CD4-positive, alpha-beta T cell (primary cell): ENCODE measurements at regions of chr2 and their contacts with region 1.

Region 1: GRCh38 chr2:128090945-128091725 is at the start of gene UGGT1:
- DNase-seq: peak; percentile 88 to 98 (median 91)
- ATAC-seq: peak; percentile 96
- H3K4me3 ChIP-seq: peak within 1 kb of the TSS; percentile 89
- H3K4me3 Mint-ChIP-seq: peak within 1 kb of the TSS; percentile 98
- H3K27ac ChIP-seq: peak within 1 kb of the TSS; percentile 75 to 82
- H3K27ac Mint-ChIP-seq: peak within 1 kb of the TSS; percentile 97
- H3K4me1 ChIP-seq: peaks cover 26% of the 10 kb centered on the region
- H3K4me1 Mint-ChIP-seq: peaks cover 53% of the 10 kb centered on the region
- H3K27me3 ChIP-seq: no peaks in the 10 kb centered on the region
- H3K27me3 Mint-ChIP-seq: no peaks in the 10 kb centered on the region
- CTCF ChIP-seq: no peak
- total RNA-seq, gene UGGT1: 23.5 to 28.4 TPM

Region 2: GRCh38 chr2:127293748-127294562 is 797.2 kb before region 1 on chr2 and contains the start of gene ERCC3:
- CTCF ChIA-PET with region 1: no interaction called
- POLR2A ChIA-PET with region 1: interaction called, 4 read pairs
- intact Hi-C with region 1: loop called in 1 of 2 experiments (anchors 10 kb)
- DNase-seq: peak; percentile 56 to 88 (median 74)
- ATAC-seq: peak; percentile 86
- H3K4me3 ChIP-seq: peak within 1 kb of the TSS; percentile 93
- H3K4me3 Mint-ChIP-seq: peak within 1 kb of the TSS; percentile 93
- H3K27ac ChIP-seq: peak within 1 kb of the TSS; percentile 60 to 69
- H3K27ac Mint-ChIP-seq: peak within 1 kb of the TSS; percentile 79
- H3K4me1 ChIP-seq: peaks cover 20% of the 10 kb centered on the region
- H3K4me1 Mint-ChIP-seq: peaks cover 36% of the 10 kb centered on the region
- H3K27me3 ChIP-seq: no peaks in the 10 kb centered on the region
- H3K27me3 Mint-ChIP-seq: no peaks in the 10 kb centered on the region
- CTCF ChIP-seq: no peak
- total RNA-seq, gene ERCC3: 40.0 to 44.0 TPM

Region 3: DNA sequence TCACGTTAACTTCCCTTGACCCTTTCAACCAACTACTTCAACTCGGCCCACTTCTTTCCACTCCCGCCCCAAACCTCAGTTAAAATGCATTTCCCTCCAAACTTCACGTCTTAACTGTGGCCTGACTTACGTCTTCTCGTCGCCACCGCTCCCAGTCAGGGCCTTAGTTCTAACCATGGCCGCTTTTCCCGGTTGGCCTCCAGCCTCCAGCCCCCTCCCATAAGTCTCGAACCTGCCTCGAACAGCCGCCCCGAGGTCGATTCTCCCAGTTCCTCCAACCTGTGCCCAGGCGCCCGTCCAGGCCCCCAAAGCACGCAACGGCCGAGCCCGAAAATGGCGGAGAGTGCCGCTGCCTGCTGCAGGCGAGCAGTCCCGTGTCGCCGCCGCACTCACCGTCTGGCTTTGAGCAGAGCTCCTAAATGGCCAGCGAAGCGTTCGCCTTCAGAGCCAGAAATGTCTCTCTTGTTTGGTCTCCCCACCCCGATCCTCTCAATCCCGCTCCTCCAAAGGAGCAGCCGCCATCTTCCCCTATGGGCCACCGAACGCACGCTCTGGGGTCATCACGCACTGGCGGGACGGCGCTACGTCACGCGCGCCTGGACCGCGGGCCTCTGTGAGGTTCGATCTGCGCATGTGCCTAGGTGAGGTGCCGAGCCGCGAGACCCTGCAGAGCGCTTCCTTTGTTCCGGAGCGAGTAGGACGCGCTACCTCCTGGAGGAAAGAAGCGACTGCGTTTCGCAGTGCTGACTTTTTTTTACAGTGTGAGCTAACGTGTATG is 280.3 kb before region 1 on chr2 and contains the start of gene WDR33:
- CTCF ChIA-PET with region 1: no interaction called
- POLR2A ChIA-PET with region 1: no interaction called
- intact Hi-C with region 1: loop called in 1 of 2 experiments (anchors 2 kb)
- DNase-seq: peak; percentile 89 to 98 (median 93)
- ATAC-seq: peak; percentile 96
- H3K4me3 ChIP-seq: peak within 1 kb of the TSS; percentile 83
- H3K4me3 Mint-ChIP-seq: peak within 1 kb of the TSS; percentile 97
- H3K27ac ChIP-seq: peak within 1 kb of the TSS; percentile 95 to 97
- H3K27ac Mint-ChIP-seq: peak within 1 kb of the TSS; percentile 99
- H3K4me1 ChIP-seq: peaks cover 36% of the 10 kb centered on the region
- H3K4me1 Mint-ChIP-seq: peaks cover 54% of the 10 kb centered on the region
- H3K27me3 ChIP-seq: no peaks in the 10 kb centered on the region
- H3K27me3 Mint-ChIP-seq: no peaks in the 10 kb centered on the region
- CTCF ChIP-seq: no peak
- total RNA-seq, gene WDR33: 59.8 to 61.5 TPM

Region 4: DNA sequence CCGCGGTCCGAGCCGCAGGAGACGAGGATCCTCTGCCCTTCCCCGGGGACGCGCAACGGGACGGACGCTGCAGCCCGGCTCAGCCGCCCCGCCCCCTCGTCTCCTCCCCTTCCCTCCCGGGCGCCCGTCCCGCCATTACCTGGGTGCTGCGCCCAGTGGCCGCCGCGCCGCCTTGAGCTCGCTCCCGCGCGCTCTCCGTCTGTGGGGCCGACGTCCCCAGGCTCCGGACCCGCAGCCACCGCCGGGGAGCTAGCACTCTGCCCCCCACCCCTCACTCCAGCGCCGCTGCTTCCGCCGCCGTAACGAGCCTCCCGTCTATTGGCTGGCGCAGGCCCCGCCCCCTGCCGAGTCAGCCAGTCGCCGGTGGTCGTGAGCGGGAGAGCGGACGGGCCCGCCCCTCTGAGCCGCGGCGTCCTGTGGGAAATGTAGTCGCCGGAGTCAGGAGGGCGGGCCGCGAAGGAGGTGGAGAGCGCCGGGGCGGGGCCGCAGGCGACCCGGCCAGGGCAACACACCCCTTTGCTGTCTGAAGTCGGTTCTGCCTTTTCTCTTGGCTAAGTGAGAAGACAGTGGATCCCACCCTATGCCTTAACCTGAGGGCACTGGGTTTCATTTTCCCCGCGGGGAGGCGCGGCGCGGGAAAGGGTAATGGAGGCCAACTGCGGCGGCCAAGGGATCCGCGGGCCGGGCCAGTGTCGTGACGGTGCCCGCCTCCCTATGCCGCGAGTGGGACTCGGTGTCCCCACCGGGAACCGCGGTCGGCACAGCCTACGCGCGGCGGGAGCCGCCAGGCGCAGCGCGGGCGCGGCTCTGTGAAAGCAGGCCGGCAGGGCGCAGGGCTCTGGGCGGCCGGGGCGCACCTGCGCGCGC is 63.1 kb before region 1 on chr2 and contains the start of gene SAP130:
- CTCF ChIA-PET with region 1: no interaction called
- POLR2A ChIA-PET with region 1: interaction called, 71 read pairs
- intact Hi-C with region 1: loop called (anchors 1 kb)
- DNase-seq: peak; percentile 96 to 99 (median 98)
- ATAC-seq: peak; percentile 76
- H3K4me3 ChIP-seq: peak within 1 kb of the TSS; percentile 77
- H3K4me3 Mint-ChIP-seq: peak within 1 kb of the TSS; percentile 99
- H3K27ac ChIP-seq: peak within 1 kb of the TSS; percentile 85 to 89
- H3K27ac Mint-ChIP-seq: peak within 1 kb of the TSS; percentile 96
- H3K4me1 ChIP-seq: peaks cover 15% of the 10 kb centered on the region
- H3K4me1 Mint-ChIP-seq: peaks cover 30% of the 10 kb centered on the region
- H3K27me3 ChIP-seq: no peaks in the 10 kb centered on the region
- H3K27me3 Mint-ChIP-seq: no peaks in the 10 kb centered on the region
- CTCF ChIP-seq: no peak
- total RNA-seq, gene SAP130: 19.2 to 21.0 TPM

Region 5: DNA sequence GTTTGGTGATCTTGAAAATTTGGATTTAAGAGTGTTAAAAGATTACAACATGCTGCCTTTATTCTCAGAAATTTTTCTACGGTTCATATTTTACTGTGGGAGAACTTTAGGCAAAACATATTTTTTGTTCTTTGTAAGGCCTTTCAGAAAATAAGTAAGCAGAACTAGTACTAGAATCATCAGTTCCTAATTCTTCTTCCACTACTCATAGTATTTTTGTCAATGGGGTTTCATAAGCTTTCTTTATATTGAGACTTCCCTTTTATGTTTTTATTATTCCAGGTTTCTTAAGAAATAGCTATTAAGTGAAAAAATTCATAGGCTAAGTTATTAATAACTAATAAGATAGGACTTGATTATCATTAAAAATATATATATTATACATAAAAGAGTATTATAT is 12.3 kb after region 1 on chr2:
- CTCF ChIA-PET with region 1: interaction called, 3 read pairs
- POLR2A ChIA-PET with region 1: interaction called, 14 read pairs
- intact Hi-C with region 1: no loop called
- DNase-seq: no peak
- ATAC-seq: no peak
- H3K4me3 ChIP-seq: no peak overlapping the region
- H3K4me3 Mint-ChIP-seq: no peak overlapping the region
- H3K27ac ChIP-seq: no peak overlapping the region
- H3K27ac Mint-ChIP-seq: no peak overlapping the region
- H3K4me1 ChIP-seq: no peaks in the 10 kb centered on the region
- H3K4me1 Mint-ChIP-seq: peaks cover 19% of the 10 kb centered on the region
- H3K27me3 ChIP-seq: no peaks in the 10 kb centered on the region
- H3K27me3 Mint-ChIP-seq: no peaks in the 10 kb centered on the region
- CTCF ChIP-seq: no peak

Region 6: DNA sequence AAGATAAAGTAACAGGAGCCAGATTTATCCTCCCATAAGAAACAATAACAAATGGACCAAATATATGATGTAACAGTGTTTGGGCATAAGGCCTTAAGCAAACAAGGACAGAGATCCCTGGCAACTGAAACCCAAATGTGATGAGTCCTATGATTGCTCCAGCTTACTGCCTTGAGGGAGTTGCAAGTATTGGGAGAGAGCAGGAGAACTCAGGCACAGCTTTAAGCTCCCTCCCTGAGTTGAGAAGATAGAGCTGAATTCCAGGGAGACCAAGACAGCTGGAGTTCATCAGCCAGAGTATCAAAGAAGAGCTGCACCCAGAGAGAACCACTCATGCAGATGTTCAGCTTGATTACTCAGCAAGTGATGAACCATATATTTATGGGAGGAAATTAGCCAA is 1073.9 kb after region 1 on chr2:
- CTCF ChIA-PET with region 1: no interaction called
- POLR2A ChIA-PET with region 1: no interaction called
- intact Hi-C with region 1: no loop called
- DNase-seq: no peak
- ATAC-seq: no peak
- H3K4me3 ChIP-seq: no peak overlapping the region
- H3K4me3 Mint-ChIP-seq: no peak overlapping the region
- H3K27ac ChIP-seq: no peak overlapping the region
- H3K27ac Mint-ChIP-seq: no peak overlapping the region
- H3K4me1 ChIP-seq: no peaks in the 10 kb centered on the region
- H3K4me1 Mint-ChIP-seq: no peaks in the 10 kb centered on the region
- H3K27me3 ChIP-seq: peaks cover 0 to 4% of the 10 kb centered on the region in 2 experiments
- H3K27me3 Mint-ChIP-seq: no peaks in the 10 kb centered on the region
- CTCF ChIP-seq: no peak

Region 7: DNA sequence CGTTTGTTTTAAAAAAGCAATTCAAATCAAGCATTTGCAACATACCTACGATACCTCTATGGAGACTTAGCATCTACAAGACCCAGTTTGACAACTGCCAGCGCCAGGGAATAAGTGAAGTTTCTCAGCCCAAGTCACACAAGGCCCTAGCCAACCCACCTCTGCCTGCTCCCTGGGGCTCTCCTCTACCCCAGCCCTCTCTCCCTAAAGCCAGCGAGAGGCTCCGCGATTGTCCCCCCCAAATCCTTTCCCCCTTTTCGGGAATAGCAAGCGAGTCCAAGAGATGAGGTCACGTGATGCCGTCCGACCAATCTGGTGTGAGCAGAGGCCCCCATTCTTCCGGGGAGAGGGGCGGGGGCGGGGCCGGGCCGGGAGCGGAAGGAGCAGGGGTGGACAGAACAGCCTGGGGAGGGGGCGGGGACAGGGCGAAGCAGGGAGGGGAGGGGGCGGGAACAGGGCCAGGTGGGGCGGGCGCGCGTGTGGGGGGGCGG is 1786.2 kb after region 1 on chr2:
- CTCF ChIA-PET with region 1: no interaction called
- POLR2A ChIA-PET with region 1: no interaction called
- intact Hi-C with region 1: loop called in 1 of 2 experiments (anchors 5 kb)
- DNase-seq: peak; percentile 72 to 93 (median 82)
- ATAC-seq: peak; percentile 90
- H3K4me3 ChIP-seq: peak overlapping the region; percentile 81
- H3K4me3 Mint-ChIP-seq: peak overlapping the region; percentile 99
- H3K27ac ChIP-seq: peak overlapping the region in 1 of 2 donors; percentile 50
- H3K27ac Mint-ChIP-seq: peak overlapping the region; percentile 92
- H3K4me1 ChIP-seq: peaks cover 15% of the 10 kb centered on the region
- H3K4me1 Mint-ChIP-seq: peaks cover 11% of the 10 kb centered on the region
- H3K27me3 ChIP-seq: no peaks in the 10 kb centered on the region
- H3K27me3 Mint-ChIP-seq: no peaks in the 10 kb centered on the region
- CTCF ChIP-seq: no peak